ENCODE measurements at regions of chr4 and their contacts with region 1.

Region 1: GRCh38 chr4:25180524-25181131 is 20.4 kb upstream of the SEPSECS start:
- DNase-seq: peak; percentile 32
- ATAC-seq: peak; percentile 92
- H3K4me3 ChIP-seq: no peak overlapping the region
- H3K27ac ChIP-seq: no peak overlapping the region
- H3K4me1 ChIP-seq: peaks cover 0 to 2% of the 10 kb centered on the region in 2 experiments; a peak in 1 of 4 replicates
- H3K27me3 ChIP-seq: no peaks in the 10 kb centered on the region
- CTCF ChIP-seq: peak; percentile 60 to 84 (median 76); a peak in 5 of 6 replicates
- POLR2A ChIP-seq: no peak
- RAD21 ChIP-seq: peak; percentile 60

Region 2: DNA sequence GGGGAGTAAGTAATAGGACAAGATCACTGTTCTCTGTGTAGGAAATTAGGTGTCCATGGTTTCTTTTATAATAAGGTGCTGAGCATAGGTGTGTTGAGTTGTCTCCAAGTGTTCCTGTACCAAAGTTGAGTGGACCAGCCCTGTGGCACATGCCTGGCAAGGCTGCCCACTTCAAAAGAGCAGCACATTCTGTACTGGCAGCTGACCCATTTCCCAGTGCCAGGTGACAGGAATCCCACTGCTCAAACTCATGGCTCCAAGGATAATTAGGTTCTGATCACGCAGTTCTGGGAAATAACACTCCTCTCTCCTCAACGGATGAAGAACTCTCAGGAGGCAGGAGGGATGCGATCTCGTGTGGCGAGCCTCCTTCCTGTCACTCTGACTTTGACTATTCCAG is 137.1 kb before region 1 on chr4:
- CTCF ChIA-PET with region 1: no interaction called
- POLR2A ChIA-PET with region 1: no interaction called
- RAD21 ChIA-PET with region 1: no interaction called
- intact Hi-C with region 1: no loop called
- DNase-seq: no peak
- ATAC-seq: no peak
- H3K4me3 ChIP-seq: no peak overlapping the region
- H3K27ac ChIP-seq: no peak overlapping the region
- H3K4me1 ChIP-seq: no peaks in the 10 kb centered on the region
- H3K27me3 ChIP-seq: peaks cover 61% of the 10 kb centered on the region
- CTCF ChIP-seq: no peak
- POLR2A ChIP-seq: no peak
- RAD21 ChIP-seq: no peak

Region 3: GRCh38 chr4:25367004-25367621 is 186.5 kb after region 1 on chr4:
- CTCF ChIA-PET with region 1: interaction called, 11 read pairs
- POLR2A ChIA-PET with region 1: no interaction called
- RAD21 ChIA-PET with region 1: no interaction called
- intact Hi-C with region 1: loop called (anchors 1 kb)
- DNase-seq: no peak
- ATAC-seq: no peak
- H3K4me3 ChIP-seq: no peak overlapping the region
- H3K27ac ChIP-seq: no peak overlapping the region
- H3K4me1 ChIP-seq: no peaks in the 10 kb centered on the region
- H3K27me3 ChIP-seq: no peaks in the 10 kb centered on the region
- CTCF ChIP-seq: peak; percentile 55 to 72 (median 69); a peak in 5 of 6 replicates
- POLR2A ChIP-seq: no peak
- RAD21 ChIP-seq: peak; percentile 77